ENCODE measurements at regions of chr18 and their contacts with region 1.

Region 1: DNA sequence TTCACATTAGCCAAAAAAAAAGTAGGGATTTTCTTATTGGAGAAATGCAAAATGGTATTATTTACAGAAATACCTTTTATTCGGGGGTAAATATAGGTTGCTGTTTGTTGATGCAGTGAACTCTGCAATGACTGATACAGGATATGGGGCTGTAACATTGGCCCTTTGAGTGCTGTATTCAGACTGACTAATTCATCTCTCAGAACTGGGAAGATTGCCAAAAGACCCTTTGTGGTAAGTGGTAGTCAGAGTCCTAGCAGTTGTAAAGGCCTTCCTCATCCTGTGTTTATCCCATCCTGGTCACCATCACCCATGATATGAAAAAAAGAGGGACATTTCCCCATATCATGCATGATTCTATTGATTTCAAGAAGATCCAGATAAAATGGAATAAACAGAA is 14.0 kb upstream of the DCC start:
- DNase-seq: peak; percentile 39
- ATAC-seq: no peak
- H3K4me3 ChIP-seq: no peak overlapping the region
- H3K27ac ChIP-seq: no peak overlapping the region
- H3K4me1 ChIP-seq: no peaks in the 10 kb centered on the region
- H3K27me3 ChIP-seq: no peaks in the 10 kb centered on the region
- CTCF ChIP-seq: no peak

Region 2: DNA sequence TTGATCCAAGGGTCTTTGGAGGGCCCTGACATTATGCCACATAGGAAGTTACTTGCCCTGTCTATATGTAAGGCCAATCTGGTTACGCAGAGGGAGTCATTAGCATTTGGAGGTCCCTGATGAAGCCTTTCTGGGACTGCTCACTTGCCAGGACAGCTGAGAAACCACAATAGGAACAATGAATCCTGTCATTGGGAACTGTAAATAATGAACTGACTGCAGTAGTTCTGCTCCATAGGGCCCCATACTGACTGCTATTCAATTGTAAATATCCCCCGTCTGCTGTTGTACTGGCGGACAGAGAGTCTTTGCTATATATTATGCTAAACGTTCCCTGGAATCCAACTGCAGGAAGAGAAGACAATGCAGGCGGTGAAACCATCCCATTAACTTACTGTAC is 135.4 kb before region 1 on chr18:
- CTCF ChIA-PET with region 1: no interaction called
- POLR2A ChIA-PET with region 1: no interaction called
- intact Hi-C with region 1: no loop called
- DNase-seq: no peak
- ATAC-seq: no peak
- H3K4me3 ChIP-seq: no peak overlapping the region
- H3K27ac ChIP-seq: no peak overlapping the region
- H3K4me1 ChIP-seq: no peaks in the 10 kb centered on the region
- H3K27me3 ChIP-seq: no peaks in the 10 kb centered on the region
- CTCF ChIP-seq: no peak

Region 3: DNA sequence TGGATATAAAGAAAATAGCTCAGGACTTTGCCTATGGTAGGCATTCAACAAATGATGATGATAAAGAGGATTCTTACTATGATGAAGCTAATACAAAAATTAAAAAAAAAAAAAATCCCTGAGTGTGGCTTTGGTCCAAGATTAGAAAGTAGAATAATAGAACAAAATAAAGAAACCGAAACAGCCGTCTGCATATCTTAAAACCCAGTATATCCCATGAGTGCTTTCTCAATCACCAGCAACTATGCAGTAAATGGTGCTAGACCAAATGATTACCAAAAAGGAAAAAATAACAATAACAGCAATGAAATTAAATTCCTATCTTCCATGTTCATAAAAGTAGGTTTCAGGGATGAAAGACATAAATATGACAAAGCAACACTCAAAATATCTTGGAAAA is 45.3 kb before region 1 on chr18:
- CTCF ChIA-PET with region 1: no interaction called
- POLR2A ChIA-PET with region 1: no interaction called
- intact Hi-C with region 1: loop called (anchors 2 kb)
- DNase-seq: no peak
- ATAC-seq: no peak
- H3K4me3 ChIP-seq: no peak overlapping the region
- H3K27ac ChIP-seq: no peak overlapping the region
- H3K4me1 ChIP-seq: no peaks in the 10 kb centered on the region
- H3K27me3 ChIP-seq: no peaks in the 10 kb centered on the region
- CTCF ChIP-seq: no peak

Region 4: DNA sequence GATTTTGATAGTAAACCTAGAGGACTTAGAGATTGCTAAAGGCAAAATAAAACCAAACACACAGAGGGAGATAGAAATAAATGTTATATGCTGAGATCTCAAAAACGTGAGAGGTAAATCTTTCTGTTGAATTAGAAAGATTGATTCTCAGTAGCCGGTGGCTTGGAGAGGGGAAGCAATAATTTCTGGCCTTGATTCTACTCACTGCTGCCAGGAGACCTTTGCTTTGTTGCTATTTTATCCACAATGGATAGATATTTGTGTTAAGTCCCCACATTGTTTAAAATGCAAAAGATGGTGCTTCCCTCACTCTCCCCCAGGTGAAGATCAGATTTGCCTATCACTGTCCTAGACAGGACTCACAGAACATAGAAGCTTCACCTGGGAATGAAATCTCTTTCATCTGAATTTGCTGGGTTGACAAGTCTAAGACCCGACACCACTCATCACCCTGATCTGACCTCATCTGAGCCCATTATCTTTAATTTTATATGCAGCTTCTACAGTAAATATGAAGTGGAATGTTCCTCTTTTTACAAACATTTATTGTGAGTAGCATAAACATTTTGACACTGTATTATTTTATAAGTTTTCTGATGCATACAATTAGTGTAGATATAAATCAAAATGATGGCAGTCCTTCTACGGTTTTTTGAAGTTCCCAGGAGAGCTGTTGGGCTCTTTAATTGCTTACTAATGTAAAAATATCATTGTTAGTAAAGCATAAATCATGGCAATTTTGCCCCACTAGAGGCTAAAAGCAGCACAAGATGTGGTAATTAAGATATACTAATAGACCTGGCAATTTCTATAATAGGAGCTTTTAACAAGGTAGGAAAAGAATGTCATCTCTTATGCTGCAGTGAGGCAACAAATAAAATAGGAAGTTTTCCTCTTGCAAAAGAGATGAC is 163.7 kb after region 1 on chr18:
- CTCF ChIA-PET with region 1: no interaction called
- POLR2A ChIA-PET with region 1: no interaction called
- intact Hi-C with region 1: no loop called
- DNase-seq: no peak
- ATAC-seq: no peak
- H3K4me3 ChIP-seq: no peak overlapping the region
- H3K27ac ChIP-seq: no peak overlapping the region
- H3K4me1 ChIP-seq: no peaks in the 10 kb centered on the region
- H3K27me3 ChIP-seq: peaks cover 43% of the 10 kb centered on the region
- CTCF ChIP-seq: no peak

Measured in PC-3 (cell line).